ENCODE measurements at regions of chr4 and their contacts with region 1.

Region 1: DNA sequence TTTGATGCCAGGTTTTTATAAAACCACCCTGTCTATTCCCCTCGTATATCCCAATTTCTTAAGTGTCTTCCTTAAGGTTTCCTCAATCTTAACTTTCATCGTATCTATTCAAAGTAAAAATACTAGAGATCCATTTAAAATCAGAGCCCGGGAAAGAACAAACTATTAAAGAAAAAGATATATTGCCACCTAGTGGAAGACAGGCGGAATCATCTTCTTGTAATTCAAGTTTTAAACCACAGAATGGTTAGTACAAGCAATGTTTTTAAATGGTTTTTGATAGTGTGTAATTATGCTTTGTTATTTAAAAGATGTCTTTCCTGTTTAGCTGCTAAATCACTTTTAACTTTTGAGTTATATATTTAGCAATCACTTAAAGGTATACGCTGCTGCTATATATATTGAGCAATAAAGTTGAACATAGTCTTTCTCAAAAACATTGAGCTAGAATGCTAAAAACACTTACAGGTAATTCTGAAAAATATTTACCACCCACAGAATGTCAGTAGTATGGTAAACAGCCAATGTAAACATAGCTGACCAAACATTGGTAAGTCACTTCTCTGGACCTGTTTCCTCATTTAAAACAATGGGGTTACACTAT is 18.2 kb downstream of the PRDM8 start:
- DNase-seq: no peak
- H3K4me3 ChIP-seq: no peak overlapping the region
- H3K4me3 Mint-ChIP-seq: no peak overlapping the region
- H3K27ac Mint-ChIP-seq: no peak overlapping the region
- H3K4me1 ChIP-seq: no peaks in the 10 kb centered on the region
- H3K4me1 Mint-ChIP-seq: no peaks in the 10 kb centered on the region
- H3K27me3 ChIP-seq: no peaks in the 10 kb centered on the region
- H3K27me3 Mint-ChIP-seq: peaks cover 3% of the 10 kb centered on the region
- CTCF ChIP-seq: peak; percentile 48 to 56

Region 2: GRCh38 chr4:79042079-79042674 is 1173.4 kb before region 1 on chr4:
- CTCF ChIA-PET with region 1: no interaction called
- POLR2A ChIA-PET with region 1: no interaction called
- intact Hi-C with region 1: loop called (anchors 10 kb)
- DNase-seq: peak in 1 of 2 experiments; percentile 31
- H3K4me3 ChIP-seq: no peak overlapping the region
- H3K4me3 Mint-ChIP-seq: no peak overlapping the region
- H3K27ac Mint-ChIP-seq: no peak overlapping the region
- H3K4me1 ChIP-seq: peaks cover 4% of the 10 kb centered on the region; the same call in 1 of the 2 replicates
- H3K4me1 Mint-ChIP-seq: peaks cover 13% of the 10 kb centered on the region
- H3K27me3 ChIP-seq: no peaks in the 10 kb centered on the region
- H3K27me3 Mint-ChIP-seq: no peaks in the 10 kb centered on the region
- CTCF ChIP-seq: peak; percentile 44 to 50

Region 3: GRCh38 chr4:79917246-79917645 is 298.3 kb before region 1 on chr4:
- CTCF ChIA-PET with region 1: no interaction called
- POLR2A ChIA-PET with region 1: no interaction called
- intact Hi-C with region 1: loop called (anchors 2 kb)
- DNase-seq: peak; percentile 50 to 56
- H3K4me3 ChIP-seq: no peak overlapping the region
- H3K4me3 Mint-ChIP-seq: no peak overlapping the region
- H3K27ac Mint-ChIP-seq: no peak overlapping the region
- H3K4me1 ChIP-seq: no peaks in the 10 kb centered on the region
- H3K4me1 Mint-ChIP-seq: no peaks in the 10 kb centered on the region
- H3K27me3 ChIP-seq: no peaks in the 10 kb centered on the region
- H3K27me3 Mint-ChIP-seq: no peaks in the 10 kb centered on the region
- CTCF ChIP-seq: peak; percentile 64 to 75

Region 4: GRCh38 chr4:80024335-80024734 is 191.2 kb before region 1 on chr4:
- CTCF ChIA-PET with region 1: no interaction called
- POLR2A ChIA-PET with region 1: no interaction called
- intact Hi-C with region 1: no loop called
- DNase-seq: no peak
- H3K4me3 ChIP-seq: no peak overlapping the region
- H3K4me3 Mint-ChIP-seq: no peak overlapping the region
- H3K27ac Mint-ChIP-seq: no peak overlapping the region
- H3K4me1 ChIP-seq: no peaks in the 10 kb centered on the region
- H3K4me1 Mint-ChIP-seq: no peaks in the 10 kb centered on the region
- H3K27me3 ChIP-seq: no peaks in the 10 kb centered on the region
- H3K27me3 Mint-ChIP-seq: peaks cover 6% of the 10 kb centered on the region
- CTCF ChIP-seq: no peak

Region 5: GRCh38 chr4:80036949-80037685 is 178.4 kb before region 1 on chr4:
- CTCF ChIA-PET with region 1: no interaction called
- POLR2A ChIA-PET with region 1: no interaction called
- intact Hi-C with region 1: loop called (anchors 10 kb)
- DNase-seq: no peak
- H3K4me3 ChIP-seq: no peak overlapping the region
- H3K4me3 Mint-ChIP-seq: no peak overlapping the region
- H3K27ac Mint-ChIP-seq: no peak overlapping the region
- H3K4me1 ChIP-seq: no peaks in the 10 kb centered on the region
- H3K4me1 Mint-ChIP-seq: no peaks in the 10 kb centered on the region
- H3K27me3 ChIP-seq: no peaks in the 10 kb centered on the region
- H3K27me3 Mint-ChIP-seq: no peaks in the 10 kb centered on the region
- CTCF ChIP-seq: no peak

Region 6: DNA sequence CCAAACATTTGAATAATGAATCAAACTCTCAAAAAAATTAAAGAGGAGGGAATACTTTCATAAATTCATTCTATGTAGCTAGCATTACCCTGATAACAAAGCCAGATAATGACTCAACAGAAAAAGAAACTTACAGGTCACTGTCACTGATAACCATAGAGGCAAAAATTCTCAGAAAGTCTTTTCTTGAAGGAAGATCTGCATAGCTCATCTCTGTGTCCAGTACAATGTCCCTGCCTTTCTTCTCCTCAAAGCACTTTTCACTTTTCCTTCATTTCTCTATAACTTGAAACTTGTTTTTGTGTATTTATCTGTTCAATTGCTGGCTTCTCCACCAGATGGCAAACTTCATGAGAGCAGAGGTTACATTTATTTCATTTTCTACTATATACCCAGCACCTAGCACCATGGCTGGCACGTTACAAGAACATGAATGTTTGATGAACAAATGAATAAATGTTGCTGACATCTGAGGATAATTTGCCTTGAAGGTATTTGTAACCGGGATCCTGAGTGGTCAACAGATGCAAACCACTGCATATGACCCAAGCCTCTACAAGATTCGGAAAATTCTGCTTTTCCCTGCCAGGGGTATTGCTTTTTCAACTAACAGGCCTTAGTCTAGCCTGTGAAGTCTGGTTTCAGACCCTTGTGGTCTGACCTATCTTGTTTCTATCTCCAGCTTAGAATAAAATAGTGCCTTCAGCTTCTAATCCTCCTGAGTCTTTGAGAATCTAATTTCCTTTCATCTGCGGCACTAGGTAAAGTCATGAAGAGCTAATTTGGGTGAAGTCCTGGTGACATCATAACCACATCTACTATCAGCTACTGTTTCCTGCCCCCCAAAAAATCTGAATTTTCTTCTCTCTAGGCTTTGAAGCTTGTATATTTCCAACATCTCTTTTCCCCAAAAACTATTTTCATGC is 90.0 kb before region 1 on chr4:
- CTCF ChIA-PET with region 1: no interaction called
- POLR2A ChIA-PET with region 1: no interaction called
- intact Hi-C with region 1: loop called (anchors 2 kb)
- DNase-seq: no peak
- H3K4me3 ChIP-seq: no peak overlapping the region
- H3K4me3 Mint-ChIP-seq: no peak overlapping the region
- H3K27ac Mint-ChIP-seq: no peak overlapping the region
- H3K4me1 ChIP-seq: no peaks in the 10 kb centered on the region
- H3K4me1 Mint-ChIP-seq: no peaks in the 10 kb centered on the region
- H3K27me3 ChIP-seq: no peaks in the 10 kb centered on the region
- H3K27me3 Mint-ChIP-seq: peaks cover 3% of the 10 kb centered on the region
- CTCF ChIP-seq: peak; percentile 30 to 34

Region 7: DNA sequence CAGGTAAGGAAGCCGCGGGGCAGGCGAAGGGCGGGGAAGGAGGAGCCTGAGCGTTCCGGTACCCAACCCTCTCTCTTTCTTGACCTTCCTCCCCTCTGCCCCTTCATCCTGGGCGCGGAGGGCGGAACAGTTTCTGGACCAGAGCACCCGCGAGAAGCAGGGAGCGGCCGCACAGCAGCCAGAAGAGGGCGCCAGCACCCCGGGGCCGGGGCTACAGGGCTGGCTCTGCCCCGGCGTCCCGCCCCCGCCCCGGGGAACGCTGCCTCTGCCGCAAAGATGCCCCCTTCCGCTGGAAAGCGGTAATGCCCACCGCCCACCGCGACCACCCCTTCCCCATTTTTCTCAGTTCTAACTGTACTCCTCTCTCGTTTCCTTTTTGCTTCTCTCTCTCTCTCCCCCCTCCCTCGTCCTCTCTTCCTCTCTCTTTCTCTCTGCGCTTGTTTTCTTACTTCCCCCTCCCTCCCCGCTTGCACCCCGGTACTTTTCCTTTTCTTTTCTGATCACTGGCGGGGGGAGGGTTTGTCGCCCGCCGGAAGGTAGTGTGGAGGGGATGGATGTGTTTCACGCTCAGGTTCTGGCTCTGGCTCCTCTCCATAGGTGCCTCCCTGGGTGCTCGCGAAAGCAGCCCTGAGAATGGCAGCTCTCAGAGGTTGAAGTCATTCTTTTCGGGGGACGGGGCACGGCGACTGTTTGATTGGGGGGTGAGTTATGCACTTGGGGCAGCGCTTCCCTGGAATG is 31.3 kb before region 1 on chr4:
- CTCF ChIA-PET with region 1: interaction called, 3 read pairs
- POLR2A ChIA-PET with region 1: no interaction called
- intact Hi-C with region 1: loop called (anchors 1 kb)
- DNase-seq: peak; percentile 54 to 79
- H3K4me3 ChIP-seq: peak overlapping the region; percentile 7; the same call in 1 of the 2 replicates
- H3K4me3 Mint-ChIP-seq: peak overlapping the region; percentile 50
- H3K27ac Mint-ChIP-seq: no peak overlapping the region
- H3K4me1 ChIP-seq: no peaks in the 10 kb centered on the region
- H3K4me1 Mint-ChIP-seq: no peaks in the 10 kb centered on the region
- H3K27me3 ChIP-seq: no peaks in the 10 kb centered on the region
- H3K27me3 Mint-ChIP-seq: peaks cover 25% of the 10 kb centered on the region
- CTCF ChIP-seq: peak; percentile 60 to 66

Region 8: GRCh38 chr4:80202190-80202711 is 13.3 kb before region 1 on chr4:
- CTCF ChIA-PET with region 1: interaction called, 6 read pairs
- POLR2A ChIA-PET with region 1: no interaction called
- intact Hi-C with region 1: loop called (anchors 1 kb)
- DNase-seq: peak; percentile 64 to 84
- H3K4me3 ChIP-seq: peak overlapping the region; percentile 35
- H3K4me3 Mint-ChIP-seq: peak overlapping the region; percentile 67
- H3K27ac Mint-ChIP-seq: no peak overlapping the region
- H3K4me1 ChIP-seq: no peaks in the 10 kb centered on the region
- H3K4me1 Mint-ChIP-seq: peaks cover 8% of the 10 kb centered on the region
- H3K27me3 ChIP-seq: peaks cover 1% of the 10 kb centered on the region
- H3K27me3 Mint-ChIP-seq: peaks cover 30% of the 10 kb centered on the region
- CTCF ChIP-seq: peak; percentile 67 to 74